Ascending aorta (tissue), 2 donors: ENCODE measurements at regions of chr17 and their contacts with region 1.

Region 1: GRCh38 chr17:33389504-33390135 is 96.5 kb upstream of the ASIC2 start:
- DNase-seq: no peak
- H3K4me3 ChIP-seq: no peak overlapping the region
- H3K27ac ChIP-seq: no peak overlapping the region
- H3K4me1 ChIP-seq: no peaks in the 10 kb centered on the region
- H3K27me3 ChIP-seq: no peaks in the 10 kb centered on the region
- CTCF ChIP-seq: no peak

Region 2: GRCh38 chr17:33284022-33284421 is 105.6 kb before region 1 on chr17:
- intact Hi-C with region 1: no loop called
- DNase-seq: peak in 1 of 2 donors; percentile 73
- H3K4me3 ChIP-seq: no peak overlapping the region
- H3K27ac ChIP-seq: peak overlapping the region in 1 of 2 donors; percentile 20
- H3K4me1 ChIP-seq: peaks cover 0 to 4% of the 10 kb centered on the region in 2 donors
- H3K27me3 ChIP-seq: no peaks in the 10 kb centered on the region
- CTCF ChIP-seq: no peak

Region 3: DNA sequence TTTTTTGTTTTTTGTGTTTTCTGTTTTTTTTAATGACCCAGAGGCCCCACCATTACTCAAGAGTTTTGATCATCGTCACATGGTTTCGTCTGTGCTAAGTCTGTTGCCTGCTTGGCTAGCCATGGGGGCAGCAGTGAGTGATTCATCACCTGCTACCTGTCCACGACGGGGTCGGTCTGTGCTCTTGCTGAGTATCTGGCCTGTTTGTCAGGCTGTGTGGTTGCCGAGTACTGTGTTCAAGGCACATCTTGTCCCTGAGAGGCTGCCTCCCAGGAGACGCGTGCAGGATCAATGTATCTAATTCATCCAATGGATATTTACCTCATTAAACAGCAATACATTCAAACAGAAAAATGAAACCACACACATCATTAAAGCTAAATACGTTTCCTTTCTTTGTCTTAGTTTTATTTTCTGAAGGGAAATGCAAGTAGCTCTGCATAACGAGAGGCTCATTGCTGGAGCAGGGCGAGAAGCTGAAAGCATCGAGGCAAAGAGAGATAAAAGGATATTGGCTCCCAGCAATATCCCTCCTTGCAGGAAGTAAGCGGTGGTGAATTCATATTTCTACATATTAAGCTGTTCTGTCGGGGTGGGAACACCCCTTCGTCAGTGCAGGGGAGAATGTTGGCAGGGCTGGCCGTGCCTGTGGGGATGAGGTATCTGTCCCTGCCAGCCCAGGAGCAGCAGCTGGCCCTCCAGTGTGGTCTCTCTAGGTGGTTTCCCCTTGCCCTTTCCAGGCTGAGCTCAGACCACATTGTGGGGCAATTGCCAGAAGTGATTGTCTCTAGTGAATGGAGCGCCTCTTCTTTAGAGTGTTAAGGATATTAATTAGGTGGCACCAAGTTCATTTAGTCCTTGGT is 69.7 kb after region 1 on chr17:
- intact Hi-C with region 1: loop called (anchors 10 kb)
- DNase-seq: no peak
- H3K4me3 ChIP-seq: no peak overlapping the region
- H3K27ac ChIP-seq: no peak overlapping the region
- H3K4me1 ChIP-seq: no peaks in the 10 kb centered on the region
- H3K27me3 ChIP-seq: no peaks in the 10 kb centered on the region
- CTCF ChIP-seq: no peak